Sciatic nerve (tissue), 2 donors: ENCODE measurements at regions of chr12 and their contacts with region 1.

Region 1: GRCh38 chr12:6335451-6336078 is 6.3 kb downstream of the TNFRSF1A start:
- DNase-seq: peak; percentile 84
- ATAC-seq: peak; percentile 49

Region 2: GRCh38 chr12:5022465-5023061 is 1313.0 kb before region 1 on chr12:
- intact Hi-C with region 1: no loop called
- DNase-seq: no peak
- ATAC-seq: no peak

Region 3: DNA sequence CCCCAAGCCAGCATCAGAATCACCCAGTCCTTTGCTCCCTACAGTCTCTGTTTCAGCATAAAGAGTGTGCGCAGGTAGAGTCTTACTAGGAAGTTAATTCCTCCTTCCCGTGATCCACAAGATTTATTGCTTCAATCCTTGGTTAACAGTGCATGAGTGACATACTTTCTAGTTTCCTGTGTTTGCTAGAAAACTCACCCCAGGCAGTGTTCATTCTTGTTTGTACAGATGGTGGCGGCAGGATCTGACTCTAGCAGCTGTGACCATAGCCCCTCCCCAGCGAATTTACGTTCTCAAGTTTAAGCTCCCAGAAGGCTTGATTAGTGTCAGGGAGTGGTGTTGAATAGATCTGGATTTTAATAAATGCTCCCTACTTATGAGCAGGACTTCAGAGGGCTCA is 314.6 kb before region 1 on chr12:
- intact Hi-C with region 1: no loop called
- DNase-seq: no peak
- ATAC-seq: no peak

Region 4: DNA sequence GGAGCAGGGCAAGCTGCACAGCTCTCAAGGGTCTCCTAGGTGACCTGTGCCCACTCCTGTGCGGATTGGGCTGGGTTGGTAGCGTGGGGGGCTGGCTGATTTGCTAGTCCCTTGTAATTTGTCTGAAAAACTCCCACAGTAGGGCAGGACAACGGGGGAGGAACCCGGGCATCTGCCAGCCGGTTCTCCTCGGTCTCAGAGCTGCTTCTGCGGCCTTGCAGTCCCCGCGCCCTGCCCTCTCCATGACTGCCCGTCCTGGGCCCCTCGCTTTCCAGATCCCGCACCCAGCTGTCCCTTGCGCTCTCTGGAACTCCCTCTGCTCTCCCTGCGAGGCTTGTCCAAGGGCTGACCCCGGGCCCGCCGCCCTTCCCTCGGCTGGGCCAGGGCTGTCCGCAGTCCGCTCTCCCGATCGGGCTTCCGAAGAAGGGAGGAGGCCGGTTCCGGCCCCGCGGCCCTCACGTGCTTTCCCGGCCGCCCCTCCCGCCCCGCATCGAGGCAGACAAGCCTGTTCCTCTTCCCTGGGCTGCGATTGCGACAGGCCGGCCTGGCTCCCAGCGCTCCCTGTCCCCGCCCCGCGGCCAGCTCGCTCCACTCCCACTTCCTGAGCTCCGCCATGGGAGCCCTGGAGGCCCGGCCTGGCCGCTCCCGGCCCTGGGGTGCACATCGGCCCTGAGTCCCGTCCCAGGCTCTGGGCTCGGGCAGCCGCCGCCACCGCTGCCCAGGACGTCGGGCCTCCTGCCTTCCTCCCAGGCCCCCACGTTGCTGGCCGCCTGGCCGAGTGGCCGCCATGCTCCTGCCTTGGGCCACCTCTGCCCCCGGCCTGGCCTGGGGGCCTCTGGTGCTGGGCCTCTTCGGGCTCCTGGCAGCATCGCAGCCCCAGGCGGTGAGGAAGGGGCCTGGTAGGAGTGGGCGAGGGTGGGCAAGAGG is 48.3 kb after region 1 on chr12 and contains the start of gene LTBR:
- intact Hi-C with region 1: loop called (anchors 10 kb)
- DNase-seq: peak; percentile 97
- ATAC-seq: peak; percentile 98
- total RNA-seq, gene LTBR: 99.7 TPM